ENCODE measurements at regions of chr6 and their contacts with region 1.

Region 1: GRCh38 chr6:41683510-41684310 is 45.4 kb downstream of the MDFI start:
- DNase-seq: peak; percentile 88
- ATAC-seq: peak; percentile 82
- H3K4me3 ChIP-seq: peak overlapping the region in 4 of 5 experiments; percentile 51 to 57 (median 52)
- H3K4me3 Mint-ChIP-seq: peak overlapping the region; percentile 66
- H3K27ac ChIP-seq: peak overlapping the region; percentile 29 to 46
- H3K27ac Mint-ChIP-seq: peak overlapping the region; percentile 86
- H3K4me1 ChIP-seq: peaks cover 9 to 26% of the 10 kb centered on the region in 2 donors
- H3K4me1 Mint-ChIP-seq: peaks cover 23% of the 10 kb centered on the region
- H3K27me3 ChIP-seq: no peaks in the 10 kb centered on the region
- H3K27me3 Mint-ChIP-seq: no peaks in the 10 kb centered on the region
- CTCF ChIP-seq: peak; percentile 90

Region 2: DNA sequence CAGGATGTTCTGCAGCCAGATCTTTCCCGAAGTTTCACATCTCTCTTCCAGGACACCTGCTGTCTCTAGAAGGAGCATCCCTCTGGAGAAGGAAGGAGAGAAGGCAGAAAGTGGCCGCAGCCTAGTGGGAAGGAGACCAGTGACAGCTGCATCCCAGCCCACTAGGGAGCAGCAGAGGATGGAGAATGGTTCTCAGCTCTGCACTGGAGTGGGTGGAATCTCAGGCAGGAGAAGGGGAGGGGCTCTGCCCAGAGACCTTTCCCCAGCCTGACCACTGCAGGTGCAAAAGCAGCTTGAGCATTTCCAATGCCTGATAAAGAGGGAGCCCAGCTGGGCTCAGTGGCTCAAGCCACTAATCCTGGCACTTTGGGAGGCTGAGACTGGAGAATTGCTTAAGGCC is 316.0 kb before region 1 on chr6:
- CTCF ChIA-PET with region 1: interaction called, 13 read pairs
- POLR2A ChIA-PET with region 1: no interaction called
- intact Hi-C with region 1: loop called (anchors 1 kb)
- DNase-seq: no peak
- ATAC-seq: no peak
- H3K4me3 ChIP-seq: no peak overlapping the region
- H3K4me3 Mint-ChIP-seq: no peak overlapping the region
- H3K27ac ChIP-seq: no peak overlapping the region
- H3K27ac Mint-ChIP-seq: no peak overlapping the region
- H3K4me1 ChIP-seq: peaks cover 16 to 23% of the 10 kb centered on the region in 2 donors
- H3K4me1 Mint-ChIP-seq: peaks cover 22% of the 10 kb centered on the region
- H3K27me3 ChIP-seq: peaks cover 2 to 53% (median 23%) of the 10 kb centered on the region in 4 experiments
- H3K27me3 Mint-ChIP-seq: peaks cover 55% of the 10 kb centered on the region
- CTCF ChIP-seq: no peak

Region 3: DNA sequence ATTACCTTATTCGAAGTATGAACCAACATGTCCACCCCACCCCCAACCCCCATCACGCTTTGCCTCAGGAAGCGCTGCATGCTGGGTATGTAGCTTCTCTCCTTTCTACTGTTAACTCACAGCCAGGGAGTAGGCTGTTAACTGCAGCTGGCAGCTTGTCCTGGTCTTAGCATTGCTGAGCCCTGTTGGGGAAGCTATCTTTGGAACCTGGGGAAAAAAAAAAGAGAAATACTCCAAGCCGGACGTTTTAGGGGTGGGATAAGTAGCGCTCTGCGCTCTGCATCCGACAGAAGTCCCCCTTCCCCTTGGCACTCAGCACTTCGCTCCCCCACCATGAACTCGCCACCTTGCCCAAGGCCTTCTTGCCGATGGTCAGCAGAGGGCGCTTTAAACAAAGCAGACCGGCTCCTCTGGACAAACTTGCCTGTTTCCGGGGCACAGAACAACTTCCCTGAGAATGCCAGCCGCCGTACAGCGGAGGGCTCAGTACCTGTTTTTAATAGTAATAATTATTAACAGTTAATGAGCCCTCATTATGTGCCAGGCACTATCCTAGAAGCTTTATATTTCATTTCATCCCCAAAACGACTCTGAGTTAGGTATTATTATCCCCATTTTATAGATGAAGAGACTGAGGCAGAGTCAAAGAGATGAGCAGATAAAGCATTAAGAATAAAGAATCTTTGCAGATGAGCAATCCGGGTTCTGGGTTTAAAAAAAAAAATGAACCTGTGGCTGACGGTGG is 80.7 kb before region 1 on chr6:
- CTCF ChIA-PET with region 1: interaction called, 37 read pairs
- POLR2A ChIA-PET with region 1: no interaction called
- intact Hi-C with region 1: loop called (anchors 1 kb)
- DNase-seq: peak; percentile 85
- ATAC-seq: peak; percentile 90
- H3K4me3 ChIP-seq: peak overlapping the region in 1 of 5 experiments; percentile 11
- H3K4me3 Mint-ChIP-seq: peak overlapping the region; percentile 41
- H3K27ac ChIP-seq: no peak overlapping the region
- H3K27ac Mint-ChIP-seq: no peak overlapping the region
- H3K4me1 ChIP-seq: peaks cover 4 to 13% of the 10 kb centered on the region in 2 donors
- H3K4me1 Mint-ChIP-seq: peaks cover 10% of the 10 kb centered on the region
- H3K27me3 ChIP-seq: peaks cover 0 to 3% (median 0%) of the 10 kb centered on the region in 4 experiments
- H3K27me3 Mint-ChIP-seq: peaks cover 11% of the 10 kb centered on the region
- CTCF ChIP-seq: peak; percentile 82

Region 4: GRCh38 chr6:41705996-41706835 is 22.5 kb after region 1 on chr6:
- CTCF ChIA-PET with region 1: interaction called, 86 read pairs
- POLR2A ChIA-PET with region 1: interaction called, 11 read pairs
- intact Hi-C with region 1: loop called (anchors 2 kb)
- DNase-seq: peak; percentile 94
- ATAC-seq: peak; percentile 81
- H3K4me3 ChIP-seq: peak overlapping the region in 4 of 5 experiments; percentile 33 to 65 (median 56)
- H3K4me3 Mint-ChIP-seq: peak overlapping the region; percentile 86
- H3K27ac ChIP-seq: peak overlapping the region; percentile 83 to 96
- H3K27ac Mint-ChIP-seq: peak overlapping the region; percentile 100
- H3K4me1 ChIP-seq: peaks cover 84 to 87% of the 10 kb centered on the region in 2 donors
- H3K4me1 Mint-ChIP-seq: peaks cover 97% of the 10 kb centered on the region
- H3K27me3 ChIP-seq: no peaks in the 10 kb centered on the region
- H3K27me3 Mint-ChIP-seq: no peaks in the 10 kb centered on the region
- CTCF ChIP-seq: peak; percentile 89

Region 5: GRCh38 chr6:41723530-41724227 is 40.0 kb after region 1 on chr6:
- CTCF ChIA-PET with region 1: interaction called, 16 read pairs
- POLR2A ChIA-PET with region 1: interaction called, 10 read pairs
- intact Hi-C with region 1: no loop called
- DNase-seq: peak; percentile 91
- ATAC-seq: peak; percentile 90
- H3K4me3 ChIP-seq: peak overlapping the region; percentile 48 to 73 (median 59)
- H3K4me3 Mint-ChIP-seq: peak overlapping the region; percentile 96
- H3K27ac ChIP-seq: peak overlapping the region; percentile 87 to 90
- H3K27ac Mint-ChIP-seq: peak overlapping the region; percentile 99
- H3K4me1 ChIP-seq: peaks cover 95 to 100% of the 10 kb centered on the region in 2 donors
- H3K4me1 Mint-ChIP-seq: peaks cover 95% of the 10 kb centered on the region
- H3K27me3 ChIP-seq: no peaks in the 10 kb centered on the region
- H3K27me3 Mint-ChIP-seq: no peaks in the 10 kb centered on the region
- CTCF ChIP-seq: no peak

Measured in B cell (primary cell).